ENCODE measurements at regions of chr3 and their contacts with region 1.

Region 1: GRCh38 chr3:15268033-15268631 is 62.1 kb downstream of the CAPN7 start:
- DNase-seq: peak; percentile 77 to 91 (median 80)
- H3K4me3 ChIP-seq: no peak overlapping the region
- H3K4me3 Mint-ChIP-seq: peak overlapping the region in 6 of 7 donors; percentile 34 to 68 (median 50)
- H3K27ac ChIP-seq: no peak overlapping the region
- H3K27ac Mint-ChIP-seq: peak overlapping the region; percentile 32 to 87 (median 74)
- H3K4me1 ChIP-seq: peaks cover 79% of the 10 kb centered on the region
- H3K4me1 Mint-ChIP-seq: peaks cover 75 to 91% (median 90%) of the 10 kb centered on the region in 3 donors
- H3K27me3 ChIP-seq: no peaks in the 10 kb centered on the region
- H3K27me3 Mint-ChIP-seq: no peaks in the 10 kb centered on the region

Region 2: DNA sequence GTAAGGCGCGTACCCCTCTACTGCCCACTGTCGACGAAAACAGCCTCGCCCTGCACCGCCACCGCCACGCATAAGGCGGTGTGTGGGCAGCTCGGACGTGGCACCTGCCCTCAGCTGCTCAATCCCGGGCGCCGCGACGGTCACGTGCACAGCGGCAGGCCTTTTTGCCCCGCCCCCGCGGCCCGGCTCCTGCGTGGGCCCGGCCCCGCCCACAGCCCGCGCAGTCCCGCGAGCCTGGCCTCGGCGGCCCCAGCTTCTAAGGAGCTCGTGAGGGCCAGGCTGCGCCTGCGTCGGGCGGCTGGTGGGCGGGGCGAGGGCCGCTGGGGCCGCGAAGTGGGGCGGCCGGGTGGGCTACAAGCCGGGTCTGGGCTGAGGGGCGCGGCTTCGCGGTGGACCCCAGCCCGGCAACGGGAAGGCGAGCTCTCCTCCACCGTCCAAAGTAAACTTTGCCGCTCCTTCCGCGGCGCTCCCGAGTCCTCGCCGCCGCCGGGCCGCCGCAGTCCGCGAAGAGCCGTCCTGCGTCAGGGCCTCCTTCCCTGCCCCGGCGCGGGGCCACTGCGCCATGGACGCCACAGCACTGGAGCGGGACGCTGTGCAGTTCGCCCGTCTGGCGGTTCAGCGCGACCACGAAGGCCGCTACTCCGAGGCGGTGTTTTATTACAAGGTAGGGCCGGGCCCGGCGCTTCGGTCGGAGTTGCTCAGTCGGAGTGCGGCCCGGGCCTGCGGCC is 62.0 kb before region 1 on chr3 and contains the start of gene CAPN7:
- CTCF ChIA-PET with region 1: interaction called, 23 read pairs
- POLR2A ChIA-PET with region 1: no interaction called
- DNase-seq: peak; percentile 94 to 96 (median 95)
- H3K4me3 ChIP-seq: peak within 1 kb of the TSS; percentile 62
- H3K4me3 Mint-ChIP-seq: peak within 1 kb of the TSS; percentile 86 to 96 (median 93)
- H3K27ac ChIP-seq: peak within 1 kb of the TSS; percentile 93
- H3K27ac Mint-ChIP-seq: peak within 1 kb of the TSS; percentile 91 to 99 (median 96)
- H3K4me1 ChIP-seq: peaks cover 27% of the 10 kb centered on the region
- H3K4me1 Mint-ChIP-seq: peaks cover 38 to 48% (median 47%) of the 10 kb centered on the region in 3 donors
- H3K27me3 ChIP-seq: no peaks in the 10 kb centered on the region
- H3K27me3 Mint-ChIP-seq: peaks cover 0 to 2% of the 10 kb centered on the region in 2 donors
- total RNA-seq, gene CAPN7: 33.1 to 36.1 TPM

Region 3: DNA sequence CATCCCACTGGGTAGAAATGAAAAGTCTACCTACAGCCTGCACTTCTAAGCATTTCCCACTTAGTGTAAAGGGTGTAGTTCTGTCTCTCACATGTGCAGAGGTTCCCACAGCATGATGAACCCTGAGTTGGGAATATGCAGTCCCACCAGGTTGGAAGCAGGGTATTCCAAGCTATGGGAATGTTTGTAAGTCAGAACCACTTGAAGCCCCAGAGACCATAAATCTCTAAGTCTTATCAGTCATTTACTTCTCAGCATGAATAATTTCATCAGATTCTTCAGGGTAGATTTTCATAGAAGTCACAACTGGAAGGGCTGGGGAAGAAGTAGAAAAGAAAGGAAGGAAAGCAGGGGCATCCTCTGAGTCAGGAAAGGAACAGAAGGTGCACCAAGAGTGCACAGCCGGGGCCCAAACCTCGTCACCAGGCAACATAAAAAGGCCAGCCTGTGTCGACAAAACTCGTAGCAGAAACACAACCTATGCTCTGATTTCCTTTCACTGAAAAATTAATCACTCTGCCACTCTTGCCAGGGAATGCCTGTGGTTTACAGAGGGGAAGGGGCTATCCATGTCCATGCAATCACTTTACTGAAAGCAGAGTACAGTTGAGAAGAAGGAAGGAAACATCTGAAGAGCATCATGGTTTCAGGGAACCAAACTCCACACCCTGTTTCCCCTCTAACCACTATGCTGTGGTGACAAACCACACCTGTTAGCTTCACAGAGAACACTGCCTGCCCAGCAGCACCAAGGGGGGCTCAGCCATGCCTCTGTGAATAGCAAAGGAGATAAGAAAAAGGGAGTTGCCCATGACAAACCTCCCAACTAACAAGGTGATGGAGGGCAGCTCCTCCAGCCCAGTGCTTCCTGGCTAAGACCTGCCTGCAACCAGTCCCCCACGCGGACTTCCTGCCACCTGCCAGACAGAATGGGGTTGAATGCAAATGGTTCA is 23.7 kb after region 1 on chr3:
- CTCF ChIA-PET with region 1: interaction called, 15 read pairs
- POLR2A ChIA-PET with region 1: interaction called, 7 read pairs
- DNase-seq: peak; percentile 59 to 87 (median 79)
- H3K4me3 ChIP-seq: peak overlapping the region; percentile 32
- H3K4me3 Mint-ChIP-seq: peak overlapping the region; percentile 37 to 91 (median 84)
- H3K27ac ChIP-seq: peak overlapping the region; percentile 43
- H3K27ac Mint-ChIP-seq: peak overlapping the region; percentile 87 to 98 (median 94)
- H3K4me1 ChIP-seq: peaks cover 92% of the 10 kb centered on the region
- H3K4me1 Mint-ChIP-seq: peaks cover 86 to 98% (median 95%) of the 10 kb centered on the region in 3 donors
- H3K27me3 ChIP-seq: no peaks in the 10 kb centered on the region
- H3K27me3 Mint-ChIP-seq: no peaks in the 10 kb centered on the region

Region 4: GRCh38 chr3:15309662-15310335 is 41.7 kb after region 1 on chr3:
- CTCF ChIA-PET with region 1: interaction called, 22 read pairs
- POLR2A ChIA-PET with region 1: no interaction called
- DNase-seq: peak in 1 of 5 donors; percentile 42
- H3K4me3 ChIP-seq: no peak overlapping the region
- H3K4me3 Mint-ChIP-seq: peak overlapping the region in 6 of 7 donors; percentile 38 to 56 (median 46)
- H3K27ac ChIP-seq: peak overlapping the region; percentile 55
- H3K27ac Mint-ChIP-seq: peak overlapping the region; percentile 63 to 95 (median 82)
- H3K4me1 ChIP-seq: peaks cover 78% of the 10 kb centered on the region
- H3K4me1 Mint-ChIP-seq: peaks cover 59 to 76% (median 76%) of the 10 kb centered on the region in 3 donors
- H3K27me3 ChIP-seq: no peaks in the 10 kb centered on the region
- H3K27me3 Mint-ChIP-seq: no peaks in the 10 kb centered on the region

Region 5: GRCh38 chr3:15332405-15333098 is 64.4 kb after region 1 on chr3 and contains the start of gene SH3BP5:
- CTCF ChIA-PET with region 1: interaction called, 200 read pairs
- POLR2A ChIA-PET with region 1: interaction called, 7 read pairs
- DNase-seq: peak; percentile 63 to 79 (median 69)
- H3K4me3 ChIP-seq: peak within 1 kb of the TSS; percentile 92
- H3K4me3 Mint-ChIP-seq: peak within 1 kb of the TSS; percentile 91 to 97 (median 95)
- H3K27ac ChIP-seq: peak within 1 kb of the TSS; percentile 75
- H3K27ac Mint-ChIP-seq: peak within 1 kb of the TSS; percentile 70 to 95 (median 90)
- H3K4me1 ChIP-seq: peaks cover 55% of the 10 kb centered on the region
- H3K4me1 Mint-ChIP-seq: peaks cover 49 to 58% (median 55%) of the 10 kb centered on the region in 3 donors
- H3K27me3 ChIP-seq: no peaks in the 10 kb centered on the region
- H3K27me3 Mint-ChIP-seq: no peaks in the 10 kb centered on the region
- total RNA-seq, gene SH3BP5: 14.2 to 15.5 TPM

Region 6: GRCh38 chr3:15405448-15406050 is 137.4 kb after region 1 on chr3:
- CTCF ChIA-PET with region 1: interaction called, 56 read pairs
- POLR2A ChIA-PET with region 1: interaction called, 3 read pairs
- DNase-seq: peak in 2 of 5 donors; percentile 45 to 47
- H3K4me3 ChIP-seq: no peak overlapping the region
- H3K4me3 Mint-ChIP-seq: no peak overlapping the region
- H3K27ac ChIP-seq: no peak overlapping the region
- H3K27ac Mint-ChIP-seq: peak overlapping the region in 3 of 8 donors; percentile 11 to 61 (median 29)
- H3K4me1 ChIP-seq: no peaks in the 10 kb centered on the region
- H3K4me1 Mint-ChIP-seq: peaks cover 7 to 18% (median 9%) of the 10 kb centered on the region in 3 donors
- H3K27me3 ChIP-seq: no peaks in the 10 kb centered on the region
- H3K27me3 Mint-ChIP-seq: no peaks in the 10 kb centered on the region